HepG2 (cell line): ENCODE measurements at regions of chr4 and their contacts with region 1.

Region 1: GRCh38 chr4:139858436-139859225 is 193.0 kb downstream of the MGST2 start:
- DNase-seq: no peak
- ATAC-seq: no peak
- H3K4me3 ChIP-seq: no peak overlapping the region
- H3K27ac ChIP-seq: no peak overlapping the region
- H3K4me1 ChIP-seq: peaks cover 70% of the 10 kb centered on the region
- H3K27me3 ChIP-seq: no peaks in the 10 kb centered on the region; a peak in 1 of 5 replicates
- CTCF ChIP-seq: no peak
- EP300 ChIP-seq: no peak
- POLR2A ChIP-seq: no peak
- RAD21 ChIP-seq: no peak

Region 2: DNA sequence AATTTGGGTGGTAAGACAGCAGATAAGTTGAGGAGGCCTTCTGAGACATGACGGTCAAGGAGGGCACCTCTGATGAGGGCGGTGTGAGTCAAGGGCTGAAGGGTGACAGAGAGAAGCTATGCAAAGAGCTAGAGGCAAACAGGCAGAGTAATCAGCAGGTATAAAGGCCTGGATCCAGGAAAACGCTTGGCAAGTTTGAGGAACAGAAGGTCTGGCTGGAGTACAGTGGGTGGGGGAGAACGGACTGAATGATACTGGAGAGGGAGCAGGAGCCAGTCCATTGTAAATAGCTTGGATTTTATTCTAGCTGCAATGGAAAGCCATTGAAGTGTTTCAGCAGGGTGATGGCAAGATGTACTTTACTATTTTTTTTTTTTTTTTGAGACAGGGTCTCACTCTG is 365.5 kb before region 1 on chr4:
- CTCF ChIA-PET with region 1: no interaction called
- POLR2A ChIA-PET with region 1: no interaction called
- in situ Hi-C with region 1: no loop called
- intact Hi-C with region 1: no loop called
- DNase-seq: no peak
- ATAC-seq: no peak
- H3K4me3 ChIP-seq: no peak overlapping the region
- H3K27ac ChIP-seq: no peak overlapping the region
- H3K4me1 ChIP-seq: peaks cover 17% of the 10 kb centered on the region
- H3K27me3 ChIP-seq: peaks cover 0 to 5% of the 10 kb centered on the region in 2 experiments; a peak in 2 of 5 replicates
- CTCF ChIP-seq: no peak
- EP300 ChIP-seq: no peak
- POLR2A ChIP-seq: no peak
- RAD21 ChIP-seq: no peak

Region 3: DNA sequence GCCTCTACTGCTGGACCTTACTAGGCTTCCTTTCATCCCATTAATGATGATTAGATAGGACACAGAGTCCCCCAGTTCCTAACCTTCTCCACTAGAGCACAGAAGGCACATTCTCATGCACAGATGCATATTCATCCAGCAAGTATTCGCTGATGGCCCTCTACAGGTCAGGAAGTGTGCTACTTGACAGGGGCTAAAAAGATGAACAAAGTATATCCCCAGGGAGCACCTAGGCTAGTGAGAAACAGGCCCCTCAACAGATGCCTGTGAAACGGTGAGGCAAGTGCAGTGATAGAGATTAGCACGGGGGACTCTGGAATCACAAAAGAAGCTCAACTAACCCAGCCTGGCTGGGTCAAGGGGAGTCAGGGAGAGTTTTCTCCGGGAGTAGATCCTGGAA is 97.2 kb before region 1 on chr4:
- CTCF ChIA-PET with region 1: no interaction called
- POLR2A ChIA-PET with region 1: no interaction called
- in situ Hi-C with region 1: no loop called
- intact Hi-C with region 1: loop called (anchors 5 kb)
- DNase-seq: peak; percentile 82
- ATAC-seq: peak; percentile 99
- H3K4me3 ChIP-seq: no peak overlapping the region
- H3K27ac ChIP-seq: no peak overlapping the region
- H3K4me1 ChIP-seq: peaks cover 33% of the 10 kb centered on the region
- H3K27me3 ChIP-seq: peaks cover 0 to 4% of the 10 kb centered on the region in 2 experiments; a peak in 2 of 5 replicates
- CTCF ChIP-seq: peak; percentile 72
- EP300 ChIP-seq: no peak
- POLR2A ChIP-seq: no peak
- RAD21 ChIP-seq: peak; percentile 43; the same call in 1 of the 2 replicates

Region 4: DNA sequence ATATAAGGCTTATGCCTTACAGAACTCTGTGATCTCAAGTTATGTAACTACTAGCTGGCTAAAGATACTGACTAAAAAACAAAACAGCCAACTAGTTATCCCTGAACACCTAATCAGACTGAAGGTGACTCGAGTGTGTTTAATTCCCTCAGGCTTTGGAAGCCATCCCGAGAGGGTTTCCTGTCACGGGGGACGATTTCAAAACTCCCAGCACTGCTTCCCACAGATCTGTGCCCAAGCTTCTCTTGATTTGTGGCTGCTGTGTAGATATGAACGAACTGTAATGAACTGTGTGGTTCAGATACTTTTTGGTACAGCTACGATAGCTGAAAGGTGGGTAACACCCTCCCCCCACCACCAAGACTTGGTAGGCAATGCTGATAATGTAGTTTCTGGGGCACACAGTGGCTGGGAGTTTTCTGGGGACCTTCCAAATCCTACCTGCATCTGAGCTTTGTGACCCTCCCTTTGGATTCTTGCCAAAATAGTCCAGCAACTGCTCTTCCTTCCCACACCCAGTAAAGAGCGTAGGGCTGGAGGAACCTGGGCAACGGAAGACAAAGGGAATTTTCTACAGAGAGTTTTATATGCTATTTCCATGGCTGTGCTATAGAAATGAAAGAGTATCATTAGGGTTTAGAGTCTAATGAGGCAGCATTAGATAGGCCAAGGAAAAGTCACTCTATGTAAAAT is 44.2 kb before region 1 on chr4:
- CTCF ChIA-PET with region 1: no interaction called
- POLR2A ChIA-PET with region 1: no interaction called
- in situ Hi-C with region 1: no loop called
- intact Hi-C with region 1: loop called (anchors 5 kb)
- DNase-seq: no peak
- ATAC-seq: no peak
- H3K4me3 ChIP-seq: no peak overlapping the region
- H3K27ac ChIP-seq: no peak overlapping the region
- H3K4me1 ChIP-seq: peaks cover 12% of the 10 kb centered on the region
- H3K27me3 ChIP-seq: peaks cover 3 to 38% of the 10 kb centered on the region in 2 experiments; a peak in 4 of 5 replicates
- CTCF ChIP-seq: no peak
- EP300 ChIP-seq: no peak
- POLR2A ChIP-seq: no peak
- RAD21 ChIP-seq: no peak

Region 5: GRCh38 chr4:139841464-139842246 is 17.0 kb before region 1 on chr4:
- CTCF ChIA-PET with region 1: no interaction called
- POLR2A ChIA-PET with region 1: interaction called, 3 read pairs
- in situ Hi-C with region 1: no loop called
- intact Hi-C with region 1: loop called (anchors 1 kb)
- DNase-seq: peak; percentile 98
- ATAC-seq: peak; percentile 97
- H3K4me3 ChIP-seq: peak overlapping the region; percentile 34 to 54 (median 39)
- H3K27ac ChIP-seq: peak overlapping the region; percentile 91
- H3K4me1 ChIP-seq: peaks cover 82% of the 10 kb centered on the region
- H3K27me3 ChIP-seq: no peaks in the 10 kb centered on the region
- CTCF ChIP-seq: peak; percentile 41
- EP300 ChIP-seq: peak; percentile 82 to 98
- POLR2A ChIP-seq: peak in 1 of 2 experiments; percentile 3; a peak in 1 of 4 replicates
- RAD21 ChIP-seq: peak; percentile 38; the same call in 1 of the 2 replicates